ENCODE measurements at regions of chr14 and their contacts with region 1.

Region 1: DNA sequence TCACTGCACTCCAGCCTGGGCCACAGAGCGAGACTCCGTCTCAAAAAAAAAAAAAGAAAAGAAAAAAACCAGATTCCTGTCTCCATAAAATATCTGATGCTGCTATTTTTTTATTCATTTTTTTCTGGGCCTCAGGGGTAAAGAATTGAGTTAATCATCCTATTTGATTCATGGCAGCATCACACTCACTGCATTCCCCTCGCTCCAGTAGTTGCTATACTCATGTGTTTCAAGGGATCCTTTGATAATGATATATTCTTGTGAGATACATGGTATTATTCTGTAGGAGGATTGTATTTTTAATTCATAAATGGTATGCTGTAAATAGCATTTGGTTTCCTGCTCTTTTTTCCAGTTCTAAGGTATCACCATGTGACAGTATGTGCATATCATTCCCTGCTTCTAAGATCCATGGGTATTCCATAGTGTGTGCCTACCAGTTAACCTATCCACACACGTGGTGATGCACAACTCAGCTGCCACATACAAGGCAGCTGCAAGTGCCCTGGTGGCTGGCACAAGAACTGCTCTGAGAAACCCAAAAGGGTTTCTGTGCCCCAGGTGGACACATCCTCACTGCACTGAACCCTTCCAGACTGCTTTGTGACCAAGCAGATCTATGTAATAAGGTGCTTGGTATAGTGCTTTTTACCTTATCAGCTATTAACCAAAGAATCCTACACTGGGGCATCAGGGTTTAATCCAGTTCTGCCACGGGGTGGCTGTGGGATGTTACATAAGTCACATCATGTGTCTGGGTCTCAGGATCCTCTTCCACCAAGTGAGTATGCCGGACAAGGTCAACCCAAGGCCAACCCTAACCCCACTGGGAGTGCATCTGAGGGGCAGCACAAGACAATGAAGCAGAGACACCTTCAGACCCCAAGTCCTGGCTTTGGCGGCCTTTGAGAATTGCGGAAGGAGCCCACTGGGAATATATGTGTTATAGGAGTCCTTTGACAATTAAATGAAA is 74.6 kb downstream of the ZFP36L1 start:
- DNase-seq: peak; percentile 36 to 58
- ATAC-seq: peak; percentile 91 to 95; a peak in 5 of 6 replicates
- H3K4me3 ChIP-seq: no peak overlapping the region
- H3K27ac ChIP-seq: peak overlapping the region in 1 of 2 experiments; percentile 35; a peak in 1 of 6 replicates
- H3K4me1 ChIP-seq: 0 out of 3 replicates have a peak, but pooled peaks cover 5% of the 10 kb centered on the region
- CTCF ChIP-seq: 0 out of 3 replicates have a peak, but pooled peaks have one; percentile 9
- EP300 ChIP-seq: no peak
- POLR2A ChIP-seq: no peak
- RAD21 ChIP-seq: peak in 1 of 2 experiments; percentile 41; a peak in 2 of 5 replicates

Region 2: DNA sequence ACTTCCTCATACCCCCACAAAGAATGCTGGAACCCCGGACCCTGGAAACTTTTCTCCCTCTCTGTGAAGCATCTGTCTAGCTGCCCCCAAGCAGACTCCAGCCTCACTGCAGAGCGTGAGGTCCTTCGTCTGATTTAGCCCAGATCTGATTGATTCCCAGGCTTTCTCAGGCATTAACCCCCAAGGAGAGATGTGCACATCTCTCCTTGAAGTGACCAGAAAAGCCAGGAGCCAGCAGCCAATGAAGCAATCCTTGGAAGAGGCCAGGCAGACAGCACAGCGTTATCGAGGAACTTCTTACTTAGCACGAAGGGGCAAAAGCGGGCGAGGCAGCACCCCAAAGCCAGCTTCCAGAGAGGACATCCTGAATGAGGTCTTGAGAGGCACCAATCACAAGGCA is 26.1 kb before region 1 on chr14:
- CTCF ChIA-PET with region 1: no interaction called
- POLR2A ChIA-PET with region 1: no interaction called
- DNase-seq: no peak
- ATAC-seq: no peak
- H3K4me3 ChIP-seq: no peak overlapping the region
- H3K27ac ChIP-seq: peak overlapping the region; percentile 86 to 94; a peak in 5 of 6 replicates
- H3K4me1 ChIP-seq: peaks cover 59% of the 10 kb centered on the region
- CTCF ChIP-seq: no peak
- EP300 ChIP-seq: no peak
- POLR2A ChIP-seq: no peak
- RAD21 ChIP-seq: no peak

Region 3: DNA sequence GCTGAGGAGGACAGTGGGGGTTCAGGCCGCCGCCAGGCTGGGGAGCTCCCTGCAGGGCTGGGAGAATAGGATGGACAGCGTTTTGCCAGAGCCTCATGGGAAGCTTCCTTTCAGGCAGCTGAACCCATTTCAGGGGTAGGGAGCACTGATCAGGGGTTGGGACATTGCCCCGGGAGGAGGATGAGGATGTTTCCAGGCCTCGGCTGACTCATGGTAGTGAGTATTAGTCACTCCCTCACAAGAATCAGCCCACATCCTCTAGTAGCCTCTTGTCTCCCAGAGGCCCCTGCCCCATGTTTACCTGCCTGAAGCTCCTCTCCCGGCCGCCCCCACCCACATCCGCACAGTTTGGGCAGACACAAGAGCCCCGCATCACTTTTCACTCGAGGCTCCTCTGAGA is 15.2 kb before region 1 on chr14:
- CTCF ChIA-PET with region 1: interaction called, 18 read pairs
- POLR2A ChIA-PET with region 1: no interaction called
- DNase-seq: peak; percentile 58 to 71
- ATAC-seq: peak; percentile 73 to 84; a peak in 4 of 6 replicates
- H3K4me3 ChIP-seq: no peak overlapping the region
- H3K27ac ChIP-seq: peak overlapping the region; percentile 77 to 91
- H3K4me1 ChIP-seq: peaks cover 25% of the 10 kb centered on the region
- CTCF ChIP-seq: no peak
- EP300 ChIP-seq: no peak
- POLR2A ChIP-seq: no peak
- RAD21 ChIP-seq: 0 out of 5 replicates have a peak, but pooled peaks of 1 of the 2 experiments have one; percentile 22

Region 4: GRCh38 chr14:68730811-68731425 is 12.6 kb after region 1 on chr14:
- CTCF ChIA-PET with region 1: interaction called, 26 read pairs
- POLR2A ChIA-PET with region 1: no interaction called
- DNase-seq: no peak
- ATAC-seq: no peak
- H3K4me3 ChIP-seq: no peak overlapping the region
- H3K27ac ChIP-seq: peak overlapping the region in 1 of 2 experiments; percentile 46; a peak in 2 of 6 replicates
- H3K4me1 ChIP-seq: 0 out of 3 replicates have a peak, but pooled peaks cover 5% of the 10 kb centered on the region
- CTCF ChIP-seq: no peak
- EP300 ChIP-seq: no peak
- POLR2A ChIP-seq: no peak
- RAD21 ChIP-seq: no peak

Region 5: GRCh38 chr14:68824517-68825347 is 106.4 kb after region 1 on chr14:
- CTCF ChIA-PET with region 1: no interaction called
- POLR2A ChIA-PET with region 1: no interaction called
- DNase-seq: peak; percentile 80 to 90
- ATAC-seq: peak; percentile 94 to 99
- H3K4me3 ChIP-seq: no peak overlapping the region
- H3K27ac ChIP-seq: peak overlapping the region; percentile 60 to 72
- H3K4me1 ChIP-seq: no peaks in the 10 kb centered on the region
- CTCF ChIP-seq: peak; percentile 84
- EP300 ChIP-seq: no peak
- POLR2A ChIP-seq: no peak
- RAD21 ChIP-seq: peak; percentile 80 to 85